Pancreas (tissue), 10 donors: ENCODE measurements at regions of chr1 and their contacts with region 1.

Region 1: DNA sequence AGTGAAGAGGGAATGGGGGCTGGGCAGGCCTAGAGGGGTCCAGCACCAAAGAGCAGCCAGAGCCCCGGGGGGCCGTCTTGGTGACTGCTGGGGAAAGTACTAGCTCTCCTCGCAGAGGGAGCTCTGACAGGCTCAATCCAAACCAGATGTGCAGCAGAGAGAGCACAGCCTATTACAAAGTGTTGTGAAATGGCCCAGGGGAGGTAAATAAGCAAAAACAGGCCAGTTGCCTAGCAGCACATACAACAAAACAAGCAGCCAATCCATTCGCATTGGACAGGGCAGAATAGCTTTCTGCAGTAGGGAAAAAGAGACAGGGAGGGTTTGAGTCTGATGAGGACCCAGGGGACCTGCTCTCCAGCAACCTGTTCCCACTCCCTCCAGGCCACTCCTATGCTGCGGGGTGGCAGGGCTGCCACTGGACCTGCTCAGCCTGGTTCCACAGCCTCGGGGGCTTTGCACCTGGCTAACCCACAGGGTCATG is 239.6 kb upstream of the FGGY start:
- DNase-seq: peak; percentile 62 to 78 (median 71)
- ATAC-seq: peak; percentile 77 to 89 (median 86)
- H3K4me3 ChIP-seq: peak overlapping the region in 3 of 4 donors; percentile 9 to 19 (median 11)
- H3K27ac ChIP-seq: peak overlapping the region; percentile 37 to 78 (median 67)
- H3K4me1 ChIP-seq: peaks cover 28 to 50% (median 50%) of the 10 kb centered on the region in 3 donors
- H3K27me3 ChIP-seq: no peaks in the 10 kb centered on the region
- CTCF ChIP-seq: no peak

Region 2: DNA sequence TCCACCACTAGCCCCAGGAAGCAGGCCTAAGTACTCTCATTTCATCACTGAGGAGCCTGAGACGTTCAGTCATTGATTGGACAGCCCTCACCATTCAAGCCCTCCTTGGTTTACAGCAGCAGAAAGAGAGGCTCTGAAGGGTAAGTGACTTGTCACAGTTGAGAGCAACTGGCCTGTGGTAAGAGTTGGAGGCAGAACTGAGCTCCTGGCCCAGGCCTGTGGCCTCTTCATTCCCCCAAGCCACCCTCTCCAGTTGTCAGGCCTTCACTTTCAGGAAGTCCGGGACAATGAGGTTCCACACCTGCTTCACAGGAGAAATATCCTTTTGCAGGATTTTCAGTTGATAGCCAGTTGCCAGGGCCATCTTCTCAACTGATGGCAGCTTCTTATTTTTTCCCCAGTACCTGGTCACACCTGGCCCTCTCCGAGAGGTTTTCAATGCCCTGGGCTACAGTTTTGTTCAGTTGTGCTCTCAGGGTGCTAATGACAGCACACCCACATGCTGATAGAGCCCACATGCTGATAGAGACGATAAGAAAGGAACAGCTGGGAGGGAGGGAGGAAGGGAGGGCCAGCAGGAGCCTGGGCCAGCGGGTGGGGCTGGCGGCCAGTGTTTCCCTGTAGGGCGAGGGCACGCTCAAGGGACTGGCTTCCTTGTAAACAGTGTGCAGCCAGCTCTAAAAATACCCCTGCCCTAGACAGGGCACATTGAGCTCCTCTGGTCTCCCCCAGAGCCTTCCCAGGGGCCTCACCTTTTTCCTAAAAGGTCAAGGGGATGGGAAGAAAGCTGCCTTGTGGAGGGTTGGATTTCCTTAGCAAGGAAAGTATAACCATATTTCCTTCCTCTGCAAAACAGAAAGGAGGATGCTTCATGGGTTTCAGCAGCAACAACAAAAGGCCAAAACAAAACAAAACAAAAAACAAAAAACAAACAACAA is 160.7 kb before region 1 on chr1:
- intact Hi-C with region 1: loop called in 1 of 3 experiments (anchors 10 kb)
- DNase-seq: peak in 5 of 6 donors; percentile 55 to 82 (median 76)
- ATAC-seq: peak; percentile 55 to 79 (median 77)
- H3K4me3 ChIP-seq: no peak overlapping the region
- H3K27ac ChIP-seq: peak overlapping the region in 2 of 4 donors; percentile 64
- H3K4me1 ChIP-seq: peaks cover 12 to 76% (median 58%) of the 10 kb centered on the region in 3 donors
- H3K27me3 ChIP-seq: no peaks in the 10 kb centered on the region
- CTCF ChIP-seq: no peak

Region 3: DNA sequence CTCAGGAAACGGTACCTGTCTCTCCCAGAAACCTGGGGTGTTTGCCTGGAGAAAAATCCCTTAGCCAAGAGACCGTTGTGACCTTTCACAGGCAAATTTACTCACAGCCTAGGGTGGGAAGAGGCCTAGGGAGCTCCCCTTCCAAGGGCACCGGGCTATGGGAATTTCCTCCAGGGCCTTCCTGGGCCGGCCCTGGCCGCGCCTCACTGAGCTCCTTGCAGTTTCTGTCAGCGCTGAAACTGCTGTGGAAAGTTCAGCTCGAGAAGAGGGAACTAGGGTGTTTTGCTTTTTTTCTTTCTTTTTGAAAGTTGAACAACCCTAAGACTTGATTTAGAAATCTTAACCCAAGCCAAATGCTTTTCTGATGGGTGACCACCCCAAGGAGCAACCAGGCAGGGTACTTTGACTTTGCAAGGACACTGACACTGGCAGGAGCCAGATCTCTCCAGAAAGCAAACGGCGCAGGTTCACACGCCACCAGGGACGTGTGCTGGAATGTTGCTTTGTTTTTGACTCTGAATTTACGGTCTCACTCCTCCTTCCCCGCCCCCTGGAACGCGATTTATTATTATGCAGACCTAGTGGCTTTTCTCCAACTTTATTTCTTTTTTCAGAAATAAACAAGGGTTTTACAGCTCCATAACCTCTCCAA is 43.9 kb before region 1 on chr1:
- intact Hi-C with region 1: no loop called
- DNase-seq: peak in 5 of 6 donors; percentile 33 to 70 (median 43)
- ATAC-seq: peak; percentile 75 to 89 (median 88)
- H3K4me3 ChIP-seq: peak overlapping the region in 1 of 4 donors; percentile 2
- H3K27ac ChIP-seq: peak overlapping the region; percentile 59 to 94 (median 72)
- H3K4me1 ChIP-seq: peaks cover 10 to 20% (median 19%) of the 10 kb centered on the region in 3 donors
- H3K27me3 ChIP-seq: no peaks in the 10 kb centered on the region
- CTCF ChIP-seq: no peak

Region 4: DNA sequence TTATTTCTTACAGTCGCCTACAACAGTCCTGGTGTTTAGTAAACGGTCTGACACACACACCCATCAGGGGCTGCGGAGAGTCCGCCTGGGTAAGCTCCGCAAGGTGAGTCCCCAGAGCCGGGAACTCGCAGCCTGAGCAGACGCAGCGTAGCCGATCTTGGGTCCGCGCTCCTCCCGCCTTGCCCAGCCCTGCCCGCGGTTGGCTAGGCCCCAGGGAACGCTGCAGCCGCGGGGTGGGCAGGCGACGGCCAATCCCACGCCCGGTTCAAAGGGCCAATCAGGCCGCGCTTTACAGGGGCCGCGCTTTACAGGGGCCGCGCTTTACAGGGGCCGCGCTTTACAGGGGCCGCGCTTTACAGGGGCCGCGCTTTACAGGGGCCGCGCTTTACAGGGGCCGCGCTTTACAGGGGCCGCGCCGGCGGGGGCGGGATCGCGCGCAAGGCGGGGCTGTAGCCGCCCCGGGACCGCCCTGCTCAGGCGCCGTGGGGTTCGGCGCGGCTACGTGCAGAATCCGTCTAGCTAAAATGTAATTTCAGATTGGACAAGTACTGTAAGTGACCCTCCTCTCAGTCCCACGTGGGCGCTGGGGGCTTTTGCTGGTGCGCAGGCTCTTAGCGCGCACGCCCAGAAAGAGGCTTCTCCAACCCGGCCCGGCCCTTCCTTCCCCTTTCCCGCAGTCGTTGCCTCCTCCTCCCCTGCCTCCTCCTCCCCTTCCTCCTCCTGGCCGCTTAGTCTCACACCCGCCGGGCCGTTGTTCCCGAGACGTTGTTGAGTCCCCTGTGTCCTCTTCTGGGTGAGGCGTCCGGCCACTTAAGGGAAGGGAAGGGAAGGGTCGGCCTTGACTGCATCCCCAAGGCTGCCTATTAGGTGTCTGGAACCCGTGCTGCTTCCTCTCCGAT is 239.4 kb after region 1 on chr1 and contains the start of gene FGGY:
- intact Hi-C with region 1: loop called in 1 of 3 experiments (anchors 10 kb)
- DNase-seq: peak; percentile 94 to 99 (median 96)
- ATAC-seq: peak; percentile 87 to 93 (median 90)
- H3K4me3 ChIP-seq: peak within 1 kb of the TSS; percentile 10 to 55 (median 38)
- H3K27ac ChIP-seq: peak within 1 kb of the TSS; percentile 61 to 97 (median 80)
- H3K4me1 ChIP-seq: peaks cover 0 to 13% (median 8%) of the 10 kb centered on the region in 3 donors
- H3K27me3 ChIP-seq: no peaks in the 10 kb centered on the region
- CTCF ChIP-seq: no peak
- total RNA-seq, gene FGGY: 12.5 to 27.0 (median 17.1) TPM